B cell (primary cell): ENCODE measurements at regions of chr3 and their contacts with region 1.

Region 1: DNA sequence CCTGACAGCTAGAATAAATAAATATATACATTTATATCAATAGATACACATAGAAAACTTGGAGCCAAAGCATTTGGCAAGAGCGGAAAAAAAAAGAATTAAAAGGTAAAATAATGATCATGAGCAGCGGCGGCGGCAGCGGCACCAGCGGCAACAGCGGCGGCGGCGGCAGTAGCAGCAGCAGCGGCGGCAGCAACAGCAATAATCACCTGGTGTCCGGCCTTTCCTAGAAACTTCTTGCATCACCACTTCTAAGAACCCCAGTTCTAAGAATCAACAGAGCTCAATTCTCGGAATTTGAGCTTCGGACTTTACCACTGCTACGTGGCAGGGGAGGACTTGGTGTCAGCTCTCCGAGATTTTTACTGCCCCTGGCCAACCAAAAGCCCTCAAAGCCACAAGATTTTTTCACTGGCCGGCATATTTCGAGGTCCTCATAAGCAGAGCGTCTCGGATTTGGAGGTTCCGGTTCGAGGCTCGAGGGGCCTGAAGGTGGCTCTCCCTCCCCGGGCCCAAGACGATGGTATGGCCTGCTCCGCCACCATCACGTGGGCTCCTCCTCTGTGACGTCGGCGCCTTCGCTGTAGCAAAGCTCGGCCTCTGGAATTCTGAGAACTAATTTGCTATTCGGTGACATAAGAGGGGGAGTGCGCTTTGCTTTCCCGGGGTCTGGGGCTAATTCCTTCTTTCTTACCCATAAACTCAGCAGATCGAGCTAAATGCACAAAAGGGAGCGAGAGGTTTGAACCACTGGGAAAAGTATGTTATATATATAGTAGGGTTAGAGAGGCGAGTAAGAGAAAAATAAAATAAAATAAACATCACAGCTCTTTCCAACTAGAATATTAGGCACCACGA is at the start of gene BCL6:
- DNase-seq: peak; percentile 97
- ATAC-seq: peak; percentile 60
- H3K4me3 ChIP-seq: peak within 1 kb of the TSS; percentile 67 to 96 (median 84)
- H3K4me3 Mint-ChIP-seq: peak within 1 kb of the TSS; percentile 97
- H3K27ac ChIP-seq: peak within 1 kb of the TSS; percentile 88 to 96
- H3K27ac Mint-ChIP-seq: peak within 1 kb of the TSS; percentile 96
- H3K4me1 ChIP-seq: peaks cover 38 to 52% of the 10 kb centered on the region in 2 donors
- H3K4me1 Mint-ChIP-seq: peaks cover 74% of the 10 kb centered on the region
- H3K27me3 ChIP-seq: no peaks in the 10 kb centered on the region
- H3K27me3 Mint-ChIP-seq: no peaks in the 10 kb centered on the region
- CTCF ChIP-seq: no peak
- total RNA-seq, gene BCL6: 48.2 and 55.5 TPM in 2 replicates

Region 2: GRCh38 chr3:187669675-187670504 is 75.5 kb before region 1 on chr3 and contains the start of gene SST:
- CTCF ChIA-PET with region 1: no interaction called
- POLR2A ChIA-PET with region 1: no interaction called
- intact Hi-C with region 1: no loop called
- DNase-seq: no peak
- ATAC-seq: no peak
- H3K4me3 ChIP-seq: no peak within 1 kb of the TSS
- H3K4me3 Mint-ChIP-seq: no peak within 1 kb of the TSS
- H3K27ac ChIP-seq: no peak within 1 kb of the TSS
- H3K27ac Mint-ChIP-seq: no peak within 1 kb of the TSS
- H3K4me1 ChIP-seq: peaks cover 0 to 4% of the 10 kb centered on the region in 2 donors
- H3K4me1 Mint-ChIP-seq: peaks cover 5% of the 10 kb centered on the region
- H3K27me3 ChIP-seq: peaks cover 0 to 30% (median 22%) of the 10 kb centered on the region in 4 experiments
- H3K27me3 Mint-ChIP-seq: peaks cover 59% of the 10 kb centered on the region
- CTCF ChIP-seq: no peak
- total RNA-seq, gene SST: not detected in 2 replicates

Region 3: DNA sequence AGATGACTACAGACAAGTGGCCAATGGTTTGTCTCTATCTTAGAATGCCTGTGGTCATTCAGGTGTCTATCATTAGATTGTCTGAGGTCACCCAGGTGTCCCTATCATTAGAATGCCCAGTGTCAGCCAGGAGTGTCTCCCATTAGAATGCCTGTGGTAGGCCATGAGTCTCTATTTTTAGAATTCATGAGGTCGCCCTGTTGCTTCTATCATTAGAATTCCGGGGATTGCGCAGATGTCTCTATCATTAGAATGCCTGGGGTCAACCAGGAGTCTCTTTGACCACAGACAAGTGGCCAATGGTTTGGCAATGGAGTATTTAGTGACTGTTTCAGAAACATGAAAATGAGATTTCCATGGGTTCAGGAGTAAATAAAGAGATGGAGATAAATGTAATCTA is 50.6 kb before region 1 on chr3:
- CTCF ChIA-PET with region 1: no interaction called
- POLR2A ChIA-PET with region 1: no interaction called
- intact Hi-C with region 1: no loop called
- DNase-seq: no peak
- ATAC-seq: no peak
- H3K4me3 ChIP-seq: no peak overlapping the region
- H3K4me3 Mint-ChIP-seq: no peak overlapping the region
- H3K27ac ChIP-seq: no peak overlapping the region
- H3K27ac Mint-ChIP-seq: no peak overlapping the region
- H3K4me1 ChIP-seq: no peaks in the 10 kb centered on the region
- H3K4me1 Mint-ChIP-seq: no peaks in the 10 kb centered on the region
- H3K27me3 ChIP-seq: peaks cover 0 to 5% (median 3%) of the 10 kb centered on the region in 4 experiments
- H3K27me3 Mint-ChIP-seq: peaks cover 44% of the 10 kb centered on the region
- CTCF ChIP-seq: no peak

Region 4: DNA sequence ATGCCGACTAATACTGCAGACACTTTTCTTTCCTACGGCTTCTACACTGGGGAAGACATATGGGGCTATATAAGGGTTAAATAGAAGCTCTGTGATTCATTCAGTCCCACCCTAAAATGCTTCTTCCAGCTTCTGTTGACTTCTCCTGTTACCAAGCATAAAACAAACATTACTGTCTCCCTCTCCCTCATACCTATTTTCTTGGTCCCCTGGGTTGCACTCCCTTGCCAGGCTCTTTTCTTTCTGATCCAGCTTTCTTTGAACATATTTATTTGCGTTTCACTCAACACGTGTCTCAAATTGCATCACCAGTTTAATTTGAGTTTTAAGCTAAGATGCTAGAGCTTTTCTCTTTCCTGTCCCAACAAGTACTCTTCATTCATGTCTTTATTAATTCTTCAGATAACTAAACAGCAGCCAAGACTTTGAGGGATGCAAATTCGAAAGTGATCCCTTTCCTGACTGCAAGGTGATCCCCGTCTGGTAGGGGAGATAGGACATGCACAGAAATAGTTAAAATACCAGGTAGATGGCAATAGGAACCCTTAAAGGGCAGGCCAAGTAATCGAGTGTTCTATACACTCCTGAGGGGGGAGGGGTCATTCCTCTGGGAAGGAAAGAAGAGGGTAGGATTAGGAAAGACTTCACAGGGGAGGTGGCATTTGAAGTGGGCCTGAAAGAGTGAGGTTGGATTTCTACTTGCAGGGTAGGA is 198.4 kb after region 1 on chr3:
- CTCF ChIA-PET with region 1: interaction called, 10 read pairs
- POLR2A ChIA-PET with region 1: no interaction called
- intact Hi-C with region 1: no loop called
- DNase-seq: no peak
- ATAC-seq: no peak
- H3K4me3 ChIP-seq: no peak overlapping the region
- H3K4me3 Mint-ChIP-seq: no peak overlapping the region
- H3K27ac ChIP-seq: no peak overlapping the region
- H3K27ac Mint-ChIP-seq: no peak overlapping the region
- H3K4me1 ChIP-seq: peaks cover 45 to 54% of the 10 kb centered on the region in 2 donors
- H3K4me1 Mint-ChIP-seq: peaks cover 14% of the 10 kb centered on the region
- H3K27me3 ChIP-seq: peaks cover 0 to 5% (median 0%) of the 10 kb centered on the region in 4 experiments
- H3K27me3 Mint-ChIP-seq: peaks cover 25% of the 10 kb centered on the region
- CTCF ChIP-seq: no peak

Region 5: DNA sequence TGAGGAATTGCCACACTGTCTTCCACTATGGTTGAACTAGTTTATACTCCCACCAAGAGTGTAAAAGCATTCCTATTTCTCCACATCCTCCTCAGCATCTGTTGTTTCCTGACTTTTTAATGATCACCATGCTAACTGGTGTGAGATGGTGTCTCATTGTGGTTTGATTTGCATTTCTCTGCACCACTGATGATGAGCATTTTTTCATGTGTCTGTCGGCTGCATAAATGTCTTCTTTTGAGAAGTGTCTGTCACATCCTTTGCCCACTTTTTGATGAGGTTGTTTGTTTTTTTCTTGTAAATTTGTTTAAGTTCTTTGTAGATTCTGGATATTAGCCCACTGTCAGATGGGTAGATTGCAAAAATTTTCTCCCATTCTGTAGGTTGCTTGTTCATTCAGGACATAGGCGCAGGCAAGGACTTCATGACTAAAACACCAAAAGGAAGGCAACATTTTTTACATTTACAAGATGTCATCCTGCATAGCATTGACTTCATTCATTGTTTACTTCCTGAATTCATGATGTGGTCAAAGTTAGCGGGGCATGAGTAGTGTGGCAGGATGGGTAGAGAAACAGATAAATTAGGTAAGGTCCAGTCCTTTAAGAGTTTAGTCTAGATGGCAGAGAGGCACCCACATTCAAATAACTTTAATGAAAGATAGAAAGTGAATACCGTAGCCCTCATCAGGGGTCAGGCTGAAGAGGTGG is 363.4 kb after region 1 on chr3:
- CTCF ChIA-PET with region 1: interaction called, 3 read pairs
- POLR2A ChIA-PET with region 1: no interaction called
- intact Hi-C with region 1: loop called (anchors 5 kb)
- DNase-seq: peak; percentile 62
- ATAC-seq: peak; percentile 92
- H3K4me3 ChIP-seq: no peak overlapping the region
- H3K4me3 Mint-ChIP-seq: peak overlapping the region; percentile 59
- H3K27ac ChIP-seq: peak overlapping the region in 1 of 2 donors; percentile 52
- H3K27ac Mint-ChIP-seq: peak overlapping the region; percentile 87
- H3K4me1 ChIP-seq: peaks cover 19 to 29% of the 10 kb centered on the region in 2 donors
- H3K4me1 Mint-ChIP-seq: peaks cover 31% of the 10 kb centered on the region
- H3K27me3 ChIP-seq: no peaks in the 10 kb centered on the region
- H3K27me3 Mint-ChIP-seq: no peaks in the 10 kb centered on the region
- CTCF ChIP-seq: no peak

Region 6: DNA sequence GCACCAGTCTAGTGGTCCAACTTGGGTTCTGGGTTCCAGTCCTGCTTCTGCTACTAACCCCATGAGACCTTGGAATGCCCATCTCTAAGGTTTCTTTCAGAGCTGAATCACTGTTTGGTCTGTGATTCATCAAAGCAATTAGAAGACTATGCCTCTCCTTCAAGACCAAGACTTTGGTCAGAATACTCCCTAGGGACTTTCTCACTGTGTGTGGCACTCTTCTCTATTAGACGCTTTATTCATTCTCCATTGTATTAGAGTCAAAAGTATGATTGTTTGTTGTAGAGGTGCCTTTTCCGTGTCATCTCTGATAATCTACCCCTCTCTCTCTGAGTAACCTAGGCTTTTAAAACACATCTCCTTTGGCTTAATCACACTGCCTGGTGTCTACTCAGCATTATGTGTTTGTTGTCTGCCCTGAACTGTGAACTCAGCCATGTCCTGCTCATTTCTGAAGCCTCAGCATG is 499.0 kb after region 1 on chr3:
- CTCF ChIA-PET with region 1: interaction called, 11 read pairs
- POLR2A ChIA-PET with region 1: no interaction called
- intact Hi-C with region 1: loop called (anchors 2 kb)
- DNase-seq: peak; percentile 56
- ATAC-seq: peak; percentile 64
- H3K4me3 ChIP-seq: no peak overlapping the region
- H3K4me3 Mint-ChIP-seq: peak overlapping the region; percentile 42
- H3K27ac ChIP-seq: peak overlapping the region; percentile 43 to 79
- H3K27ac Mint-ChIP-seq: peak overlapping the region; percentile 60
- H3K4me1 ChIP-seq: peaks cover 53 to 54% of the 10 kb centered on the region in 2 donors
- H3K4me1 Mint-ChIP-seq: peaks cover 70% of the 10 kb centered on the region
- H3K27me3 ChIP-seq: no peaks in the 10 kb centered on the region
- H3K27me3 Mint-ChIP-seq: no peaks in the 10 kb centered on the region
- CTCF ChIP-seq: no peak

Region 7: DNA sequence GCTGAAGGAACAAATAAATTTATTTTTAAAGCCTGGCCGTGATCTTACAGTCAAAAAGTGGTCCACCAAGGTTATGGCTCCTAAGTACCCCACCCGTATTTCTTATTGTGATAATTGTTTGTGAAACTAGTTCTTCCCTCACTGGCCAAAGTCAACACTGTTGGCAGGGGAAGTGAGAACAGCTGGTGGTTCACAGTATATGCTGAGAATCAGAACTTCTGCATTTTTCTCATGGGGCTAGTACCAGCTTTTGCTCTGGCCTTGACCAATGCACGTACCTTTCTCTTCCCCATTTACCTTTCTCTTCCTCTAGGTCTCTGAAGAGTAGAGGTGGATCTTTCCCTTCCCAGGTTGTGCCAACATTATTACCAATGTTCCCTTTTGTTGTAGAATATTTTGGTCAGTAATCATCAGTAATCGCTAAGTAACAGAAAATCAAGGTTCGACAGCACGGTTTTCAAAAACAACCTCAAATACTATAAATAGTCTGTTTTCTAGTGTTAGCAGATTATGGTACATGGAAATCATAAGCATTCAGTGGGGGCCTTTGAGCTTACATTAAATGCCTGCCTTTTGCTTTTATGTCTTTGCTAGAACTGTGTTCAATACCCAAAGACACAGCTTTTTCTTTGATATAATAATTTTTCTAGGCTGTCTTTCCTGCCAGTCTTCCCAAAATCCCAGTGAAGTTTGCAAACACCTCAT is 676.6 kb after region 1 on chr3:
- CTCF ChIA-PET with region 1: interaction called, 21 read pairs
- POLR2A ChIA-PET with region 1: interaction called, 13 read pairs
- intact Hi-C with region 1: loop called (anchors 1 kb)
- DNase-seq: peak; percentile 89
- ATAC-seq: peak; percentile 95
- H3K4me3 ChIP-seq: peak overlapping the region in 1 of 5 experiments; percentile 47
- H3K4me3 Mint-ChIP-seq: peak overlapping the region; percentile 74
- H3K27ac ChIP-seq: peak overlapping the region; percentile 89 to 94
- H3K27ac Mint-ChIP-seq: peak overlapping the region; percentile 98
- H3K4me1 ChIP-seq: peaks cover 59 to 72% of the 10 kb centered on the region in 2 donors
- H3K4me1 Mint-ChIP-seq: peaks cover 90% of the 10 kb centered on the region
- H3K27me3 ChIP-seq: no peaks in the 10 kb centered on the region
- H3K27me3 Mint-ChIP-seq: no peaks in the 10 kb centered on the region
- CTCF ChIP-seq: no peak

Region 8: GRCh38 chr3:188584162-188584529 is 838.7 kb after region 1 on chr3:
- CTCF ChIA-PET with region 1: interaction called, 24 read pairs
- POLR2A ChIA-PET with region 1: no interaction called
- intact Hi-C with region 1: loop called (anchors 2 kb)
- DNase-seq: no peak
- ATAC-seq: no peak
- H3K4me3 ChIP-seq: peak overlapping the region in 1 of 5 experiments; percentile 13
- H3K4me3 Mint-ChIP-seq: no peak overlapping the region
- H3K27ac ChIP-seq: peak overlapping the region; percentile 6 to 73
- H3K27ac Mint-ChIP-seq: no peak overlapping the region
- H3K4me1 ChIP-seq: peaks cover 49 to 53% of the 10 kb centered on the region in 2 donors
- H3K4me1 Mint-ChIP-seq: peaks cover 32% of the 10 kb centered on the region
- H3K27me3 ChIP-seq: no peaks in the 10 kb centered on the region
- H3K27me3 Mint-ChIP-seq: no peaks in the 10 kb centered on the region
- CTCF ChIP-seq: no peak